Activated CD4-positive, alpha-beta T cell treated with anti-CD3 and anti-CD28 coated beads, Interleukin-2, amount 10 ng/mL, durations not matched to agents 24 days and 14 days (primary cell): ENCODE measurements at regions of chr15 and their contacts with region 1.

Region 1: DNA sequence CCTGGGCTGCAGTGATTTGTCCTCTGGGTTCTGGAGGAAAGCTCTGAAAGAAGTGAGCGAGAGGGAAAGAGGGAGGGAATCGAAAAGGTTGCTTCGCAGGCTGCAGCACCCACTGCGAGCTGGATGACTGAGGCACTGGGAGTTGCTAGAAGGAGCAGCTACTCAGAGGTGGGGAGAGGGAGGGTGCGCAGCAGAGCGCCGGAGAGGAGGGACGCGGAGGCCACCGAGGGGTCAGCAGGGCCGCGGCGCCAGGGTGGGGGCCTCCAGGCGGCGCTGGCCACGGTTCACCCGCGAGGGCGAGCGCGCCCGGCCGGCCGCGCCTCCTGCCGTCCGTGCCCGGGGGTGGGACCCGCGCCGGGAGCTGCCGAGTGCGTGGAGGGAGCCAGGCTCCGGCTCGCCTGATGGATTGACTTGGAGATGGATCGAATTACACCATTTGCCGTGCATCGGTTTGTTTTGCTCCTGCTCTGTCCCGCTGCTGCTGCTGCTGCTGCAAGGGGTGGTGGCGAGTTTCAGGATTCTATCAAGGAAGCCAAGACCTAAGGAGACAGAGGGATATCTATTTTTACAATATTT is at the start of gene SEMA6D:
- DNase-seq: no peak
- H3K4me3 Mint-ChIP-seq: no peak within 1 kb of the TSS
- H3K27ac Mint-ChIP-seq: no peak within 1 kb of the TSS
- H3K4me1 Mint-ChIP-seq: no peaks in the 10 kb centered on the region
- H3K27me3 Mint-ChIP-seq: peaks cover 50% of the 10 kb centered on the region
- total RNA-seq, gene SEMA6D: not detected in 2 replicates

Region 2: DNA sequence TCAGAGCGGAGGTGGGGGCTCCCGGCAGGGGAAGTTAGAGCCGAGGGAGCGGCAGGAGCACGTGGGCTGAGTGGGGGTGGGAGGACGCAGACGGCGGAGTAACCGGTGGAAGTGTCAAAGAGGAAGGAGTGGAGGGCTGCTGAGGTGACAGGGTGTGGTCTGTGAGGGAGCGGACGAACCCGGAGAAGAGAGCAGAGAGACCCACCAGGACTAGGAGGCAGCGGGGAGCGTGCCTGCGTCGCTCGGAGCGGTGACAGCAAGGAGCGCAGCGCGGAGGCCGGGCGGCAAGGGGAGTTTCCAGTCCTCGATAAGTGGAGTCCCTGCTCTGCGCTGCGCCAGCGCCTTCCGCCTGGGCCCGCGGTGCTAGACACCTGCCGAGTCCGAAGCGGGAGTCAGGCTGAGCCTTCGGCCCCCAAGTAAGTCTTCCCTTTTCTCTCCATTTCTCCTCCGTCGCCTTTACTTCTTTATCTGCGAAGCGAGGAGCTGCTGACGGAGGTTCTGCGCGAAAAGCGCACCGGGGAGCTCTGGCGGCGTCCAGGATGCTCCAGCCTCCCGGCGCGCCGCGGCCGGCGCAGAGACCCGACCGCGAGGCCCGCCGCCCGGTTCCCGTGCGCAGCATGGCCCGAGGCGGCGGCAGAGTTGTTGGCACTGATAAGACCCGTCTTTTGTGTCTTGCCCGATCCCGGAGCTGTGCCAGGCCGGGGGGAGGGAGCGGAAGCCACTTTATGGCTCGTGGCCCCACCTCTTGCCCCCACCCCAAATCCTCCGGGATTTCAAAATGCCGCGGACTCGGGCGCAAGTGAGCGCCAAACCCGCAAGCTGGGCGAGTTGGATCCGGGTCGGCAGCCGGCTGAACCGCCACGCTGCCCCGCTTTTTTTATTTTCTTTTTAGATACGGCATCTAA is 532.9 kb before region 1 on chr15:
- intact Hi-C with region 1: loop called (anchors 10 kb)
- DNase-seq: peak; percentile 56
- H3K4me3 Mint-ChIP-seq: peak overlapping the region; percentile 39
- H3K27ac Mint-ChIP-seq: no peak overlapping the region
- H3K4me1 Mint-ChIP-seq: peaks cover 2% of the 10 kb centered on the region
- H3K27me3 Mint-ChIP-seq: peaks cover 35% of the 10 kb centered on the region

Region 3: GRCh38 chr15:47705281-47705997 is 11.7 kb before region 1 on chr15:
- intact Hi-C with region 1: no loop called
- DNase-seq: no peak
- H3K4me3 Mint-ChIP-seq: no peak overlapping the region
- H3K27ac Mint-ChIP-seq: no peak overlapping the region
- H3K4me1 Mint-ChIP-seq: no peaks in the 10 kb centered on the region
- H3K27me3 Mint-ChIP-seq: no peaks in the 10 kb centered on the region

Region 4: GRCh38 chr15:47975427-47975826 is 258.3 kb after region 1 on chr15:
- intact Hi-C with region 1: no loop called
- DNase-seq: no peak
- H3K4me3 Mint-ChIP-seq: no peak overlapping the region
- H3K27ac Mint-ChIP-seq: no peak overlapping the region
- H3K4me1 Mint-ChIP-seq: no peaks in the 10 kb centered on the region
- H3K27me3 Mint-ChIP-seq: peaks cover 11% of the 10 kb centered on the region